ENCODE measurements at regions of chr3 and their contacts with region 1.

Region 1: GRCh38 chr3:190120269-190121060 is at the start of gene P3H2:
- DNase-seq: peak; percentile 86 to 91
- H3K4me3 ChIP-seq: peak within 1 kb of the TSS; percentile 82
- H3K4me3 Mint-ChIP-seq: peak within 1 kb of the TSS; percentile 79
- H3K27ac Mint-ChIP-seq: peak within 1 kb of the TSS; percentile 65
- H3K4me1 ChIP-seq: peaks cover 62% of the 10 kb centered on the region
- H3K4me1 Mint-ChIP-seq: peaks cover 37% of the 10 kb centered on the region
- H3K27me3 ChIP-seq: no peaks in the 10 kb centered on the region
- H3K27me3 Mint-ChIP-seq: no peaks in the 10 kb centered on the region
- CTCF ChIP-seq: peak in 1 of 2 experiments; percentile 61
- total RNA-seq, gene P3H2: 37.9 and 55.8 TPM in 2 replicates

Region 2: DNA sequence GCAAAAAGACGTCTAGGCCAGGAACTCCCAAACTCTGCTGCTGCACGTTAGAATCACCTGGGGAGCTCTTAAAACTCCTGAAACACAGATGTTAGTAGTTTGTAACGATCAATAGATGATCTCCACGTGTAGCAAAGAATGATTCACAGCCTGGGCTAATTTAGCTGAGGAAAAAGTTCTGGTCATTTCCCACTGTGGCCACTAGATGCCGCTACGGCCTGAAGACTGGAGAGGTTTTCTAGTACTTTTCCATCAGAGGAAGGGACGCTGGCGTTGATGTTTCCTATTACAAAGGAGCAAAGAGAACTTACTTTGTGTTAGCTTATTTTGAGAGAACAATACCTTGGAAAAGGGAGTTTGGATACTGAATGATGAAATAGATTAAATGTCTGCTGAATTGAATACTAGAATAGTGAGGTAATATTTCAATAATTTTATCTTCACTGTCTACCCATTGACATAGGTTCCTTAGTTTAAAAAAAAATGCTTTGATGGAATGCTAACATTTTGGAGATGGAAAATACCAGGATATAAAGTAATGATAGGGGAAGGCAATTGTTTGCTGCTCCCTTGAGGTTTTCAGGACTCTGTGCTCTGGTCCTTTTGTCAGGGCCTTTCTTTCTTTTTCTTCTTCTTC is 158.8 kb before region 1 on chr3:
- CTCF ChIA-PET with region 1: interaction called, 13 read pairs
- POLR2A ChIA-PET with region 1: no interaction called
- intact Hi-C with region 1: no loop called
- DNase-seq: peak; percentile 61 to 79
- H3K4me3 ChIP-seq: no peak overlapping the region
- H3K4me3 Mint-ChIP-seq: no peak overlapping the region
- H3K27ac Mint-ChIP-seq: no peak overlapping the region
- H3K4me1 ChIP-seq: no peaks in the 10 kb centered on the region
- H3K4me1 Mint-ChIP-seq: no peaks in the 10 kb centered on the region
- H3K27me3 ChIP-seq: no peaks in the 10 kb centered on the region
- H3K27me3 Mint-ChIP-seq: no peaks in the 10 kb centered on the region
- CTCF ChIP-seq: peak; percentile 82 to 90

Region 3: DNA sequence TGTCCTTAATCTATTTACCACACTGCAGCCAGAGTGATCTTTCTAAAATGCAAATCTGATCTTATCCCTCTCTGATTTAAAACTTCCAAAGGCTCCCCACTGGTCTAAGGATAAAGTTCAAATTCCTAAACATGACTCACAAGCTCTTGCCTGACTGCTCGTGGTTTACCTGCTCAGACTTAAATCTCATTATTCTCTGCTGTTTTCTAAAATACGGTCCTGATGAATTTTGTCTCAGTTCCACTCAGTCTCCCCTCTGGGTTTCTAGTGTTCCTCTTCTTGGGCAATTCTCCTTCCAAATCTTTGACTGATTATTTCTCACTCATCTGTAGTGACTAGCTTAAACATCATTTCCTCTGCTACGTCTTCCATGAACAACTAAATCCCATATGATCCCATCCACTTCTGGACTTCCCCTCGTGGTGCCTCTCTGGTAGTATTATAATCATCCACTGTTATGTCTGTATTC is 108.1 kb before region 1 on chr3:
- CTCF ChIA-PET with region 1: interaction called, 9 read pairs
- POLR2A ChIA-PET with region 1: interaction called, 3 read pairs
- intact Hi-C with region 1: loop called (anchors 1 kb)
- DNase-seq: peak in 1 of 2 experiments; percentile 53
- H3K4me3 ChIP-seq: no peak overlapping the region
- H3K4me3 Mint-ChIP-seq: peak overlapping the region; percentile 43
- H3K27ac Mint-ChIP-seq: peak overlapping the region; percentile 78
- H3K4me1 ChIP-seq: peaks cover 55% of the 10 kb centered on the region
- H3K4me1 Mint-ChIP-seq: peaks cover 53% of the 10 kb centered on the region
- H3K27me3 ChIP-seq: no peaks in the 10 kb centered on the region
- H3K27me3 Mint-ChIP-seq: no peaks in the 10 kb centered on the region
- CTCF ChIP-seq: no peak

Region 4: DNA sequence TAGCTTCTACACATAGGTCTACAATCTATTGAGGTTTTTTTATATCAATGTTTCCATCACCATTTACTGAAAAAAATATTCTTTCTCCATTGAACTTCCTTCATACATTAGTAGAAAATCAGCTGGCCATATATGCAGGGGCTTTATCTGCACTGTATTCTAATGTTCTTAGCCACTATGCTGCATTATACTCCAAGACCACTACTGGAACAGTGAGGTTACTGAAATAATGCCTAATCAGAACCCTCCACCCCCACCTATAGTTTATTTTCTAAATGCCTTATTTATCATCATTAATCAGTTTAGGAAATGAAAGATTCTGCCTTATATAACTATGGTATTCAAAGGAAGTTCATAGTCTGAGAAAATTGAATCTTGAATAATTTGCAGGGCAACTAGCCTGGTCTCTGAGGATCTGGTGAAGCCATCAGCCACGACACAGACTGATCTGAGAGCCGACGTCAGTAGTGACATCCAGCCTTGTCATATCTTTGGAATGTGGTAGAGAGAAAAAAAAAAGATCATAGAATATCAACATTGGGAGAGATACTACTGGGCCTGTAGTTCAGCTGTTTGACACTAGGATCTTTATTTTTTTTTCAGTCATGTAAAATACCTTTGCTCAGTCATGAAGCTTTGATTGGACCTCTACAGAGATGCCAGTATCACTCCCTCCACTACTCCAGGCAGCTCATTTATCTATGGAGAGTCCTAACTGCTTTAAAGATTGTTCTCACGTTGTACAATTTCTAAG is 66.4 kb before region 1 on chr3:
- CTCF ChIA-PET with region 1: interaction called, 5 read pairs
- POLR2A ChIA-PET with region 1: interaction called, 4 read pairs
- intact Hi-C with region 1: loop called (anchors 5 kb)
- DNase-seq: peak; percentile 66 to 67
- H3K4me3 ChIP-seq: no peak overlapping the region
- H3K4me3 Mint-ChIP-seq: no peak overlapping the region
- H3K27ac Mint-ChIP-seq: peak overlapping the region; percentile 74
- H3K4me1 ChIP-seq: peaks cover 11% of the 10 kb centered on the region
- H3K4me1 Mint-ChIP-seq: peaks cover 19% of the 10 kb centered on the region
- H3K27me3 ChIP-seq: no peaks in the 10 kb centered on the region
- H3K27me3 Mint-ChIP-seq: no peaks in the 10 kb centered on the region
- CTCF ChIP-seq: peak in 1 of 2 experiments; percentile 20

Region 5: DNA sequence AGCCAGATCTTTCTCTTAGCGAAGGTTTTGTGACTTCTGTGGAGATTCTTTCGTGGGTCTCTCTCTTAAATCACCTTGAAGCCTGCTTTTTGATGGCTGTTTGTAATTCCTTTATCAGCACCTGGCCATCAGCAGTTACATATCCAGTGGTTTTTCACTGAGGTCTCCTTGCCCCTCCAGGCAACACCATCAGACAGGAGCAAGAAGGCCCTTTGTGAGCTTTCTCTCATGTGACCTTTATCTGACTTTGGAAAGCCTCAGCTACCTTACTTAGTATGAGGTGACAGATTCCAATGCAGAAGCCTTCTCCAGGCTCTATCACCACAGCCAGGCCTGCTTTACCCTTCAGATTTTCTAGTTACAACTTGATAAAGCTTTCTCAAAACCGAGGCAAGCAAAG is 30.2 kb after region 1 on chr3:
- CTCF ChIA-PET with region 1: no interaction called
- POLR2A ChIA-PET with region 1: no interaction called
- intact Hi-C with region 1: no loop called
- DNase-seq: no peak
- H3K4me3 ChIP-seq: no peak overlapping the region
- H3K4me3 Mint-ChIP-seq: no peak overlapping the region
- H3K27ac Mint-ChIP-seq: no peak overlapping the region
- H3K4me1 ChIP-seq: peaks cover 6% of the 10 kb centered on the region; the same call in 1 of the 2 replicates
- H3K4me1 Mint-ChIP-seq: peaks cover 12% of the 10 kb centered on the region
- H3K27me3 ChIP-seq: no peaks in the 10 kb centered on the region; the same call in 1 of the 2 replicates
- H3K27me3 Mint-ChIP-seq: no peaks in the 10 kb centered on the region
- CTCF ChIP-seq: no peak

Region 6: DNA sequence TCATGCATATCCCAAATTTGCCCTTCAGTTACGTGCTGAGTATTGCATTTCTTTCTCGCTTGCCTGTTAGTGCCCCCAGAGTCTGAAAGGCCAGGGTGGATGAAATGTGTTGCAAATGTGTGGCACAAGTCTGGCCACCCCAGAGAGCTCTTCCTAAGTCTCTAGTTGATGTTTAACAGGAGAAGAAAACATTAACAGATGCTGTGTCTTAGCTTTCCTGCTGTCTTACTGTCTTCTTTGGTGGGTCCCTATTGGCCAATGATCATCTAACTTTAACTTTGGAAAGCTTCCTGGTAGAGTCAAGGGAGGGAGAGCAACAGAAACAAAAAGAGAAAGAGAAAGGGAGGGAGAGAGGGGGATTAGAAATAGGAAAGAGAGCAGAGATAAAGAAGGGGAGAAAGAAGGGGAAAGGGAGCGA is 76.9 kb after region 1 on chr3:
- CTCF ChIA-PET with region 1: no interaction called
- POLR2A ChIA-PET with region 1: no interaction called
- intact Hi-C with region 1: loop called (anchors 1 kb)
- DNase-seq: peak in 1 of 2 experiments; percentile 19
- H3K4me3 ChIP-seq: no peak overlapping the region
- H3K4me3 Mint-ChIP-seq: peak overlapping the region; percentile 22
- H3K27ac Mint-ChIP-seq: no peak overlapping the region
- H3K4me1 ChIP-seq: peaks cover 14% of the 10 kb centered on the region; the same call in 1 of the 2 replicates
- H3K4me1 Mint-ChIP-seq: peaks cover 14% of the 10 kb centered on the region
- H3K27me3 ChIP-seq: no peaks in the 10 kb centered on the region
- H3K27me3 Mint-ChIP-seq: no peaks in the 10 kb centered on the region
- CTCF ChIP-seq: no peak

Region 7: GRCh38 chr3:190249414-190249813 is 128.9 kb after region 1 on chr3:
- CTCF ChIA-PET with region 1: no interaction called
- POLR2A ChIA-PET with region 1: no interaction called
- intact Hi-C with region 1: no loop called
- DNase-seq: no peak
- H3K4me3 ChIP-seq: no peak overlapping the region
- H3K4me3 Mint-ChIP-seq: no peak overlapping the region
- H3K27ac Mint-ChIP-seq: no peak overlapping the region
- H3K4me1 ChIP-seq: no peaks in the 10 kb centered on the region
- H3K4me1 Mint-ChIP-seq: no peaks in the 10 kb centered on the region
- H3K27me3 ChIP-seq: no peaks in the 10 kb centered on the region
- H3K27me3 Mint-ChIP-seq: no peaks in the 10 kb centered on the region
- CTCF ChIP-seq: no peak

Region 8: GRCh38 chr3:190306513-190307165 is 186.2 kb after region 1 on chr3:
- CTCF ChIA-PET with region 1: interaction called, 3 read pairs
- POLR2A ChIA-PET with region 1: no interaction called
- intact Hi-C with region 1: loop called (anchors 5 kb)
- DNase-seq: peak in 1 of 2 experiments; percentile 56
- H3K4me3 ChIP-seq: no peak overlapping the region
- H3K4me3 Mint-ChIP-seq: peak overlapping the region; percentile 45
- H3K27ac Mint-ChIP-seq: peak overlapping the region; percentile 79
- H3K4me1 ChIP-seq: peaks cover 62% of the 10 kb centered on the region
- H3K4me1 Mint-ChIP-seq: peaks cover 13% of the 10 kb centered on the region
- H3K27me3 ChIP-seq: no peaks in the 10 kb centered on the region
- H3K27me3 Mint-ChIP-seq: no peaks in the 10 kb centered on the region
- CTCF ChIP-seq: no peak

Measured in Caco-2 (cell line).